ENCODE measurements at regions of chr3 and their contacts with region 1.

Region 1: DNA sequence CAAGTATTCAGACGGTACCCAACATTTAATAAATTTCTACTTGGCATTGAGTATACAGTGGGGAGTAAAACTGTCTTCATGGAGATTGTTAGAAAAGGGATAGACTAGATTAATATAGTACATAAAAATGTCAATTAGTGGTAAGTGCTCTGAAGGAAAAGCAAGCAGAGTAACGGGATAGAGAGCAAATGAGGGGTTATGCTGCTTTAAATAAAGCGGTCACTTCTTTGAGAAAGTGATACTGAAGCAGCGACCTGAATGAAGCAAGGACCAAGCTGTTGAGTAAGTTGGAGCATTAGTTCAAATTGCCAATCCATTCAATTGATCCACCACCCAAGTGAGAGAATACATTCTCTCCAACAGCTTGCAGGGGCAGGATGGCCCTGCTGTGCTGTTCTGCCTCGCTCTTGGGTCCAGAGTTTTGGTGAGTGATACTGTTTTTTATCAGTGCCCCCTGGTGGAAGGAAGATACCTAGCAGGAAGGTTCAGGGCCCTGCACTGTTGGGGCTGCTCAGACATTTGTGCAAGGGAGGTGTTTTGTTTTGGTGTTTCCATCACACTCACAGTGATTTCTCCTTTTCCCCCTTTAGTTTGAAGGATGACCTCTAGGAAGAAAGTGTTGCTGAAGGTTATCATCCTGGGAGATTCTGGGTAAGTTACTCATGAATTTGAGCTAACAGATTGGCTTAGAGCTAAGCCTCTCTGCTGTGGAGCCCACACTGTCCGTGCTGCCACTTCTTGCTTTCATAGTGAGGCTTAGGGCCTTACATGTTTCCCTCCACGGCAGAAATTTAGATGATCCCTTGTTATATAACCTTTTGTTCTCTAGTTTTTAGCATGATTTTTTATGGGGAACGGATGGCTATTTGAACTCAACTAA is 69.0 kb downstream of the RAB7A start:
- DNase-seq: peak; percentile 34 to 61 (median 48)
- H3K4me3 ChIP-seq: no peak overlapping the region
- H3K27ac ChIP-seq: no peak overlapping the region
- H3K4me1 ChIP-seq: peaks cover 8% of the 10 kb centered on the region
- H3K27me3 ChIP-seq: no peaks in the 10 kb centered on the region
- CTCF ChIP-seq: peak; percentile 33 to 70 (median 67)
- EP300 ChIP-seq: no peak
- POLR2A ChIP-seq: no peak

Region 2: GRCh38 chr3:128617557-128618397 is 177.2 kb before region 1 on chr3:
- intact Hi-C with region 1: loop called in 1 of 4 experiments (anchors 5 kb)
- DNase-seq: peak; percentile 97 to 99 (median 98)
- H3K4me3 ChIP-seq: peak overlapping the region; percentile 94
- H3K27ac ChIP-seq: peak overlapping the region; percentile 59 to 60
- H3K4me1 ChIP-seq: peaks cover 13% of the 10 kb centered on the region
- H3K27me3 ChIP-seq: no peaks in the 10 kb centered on the region
- CTCF ChIP-seq: peak; percentile 93 to 98 (median 94)
- EP300 ChIP-seq: no peak
- POLR2A ChIP-seq: no peak

Region 3: DNA sequence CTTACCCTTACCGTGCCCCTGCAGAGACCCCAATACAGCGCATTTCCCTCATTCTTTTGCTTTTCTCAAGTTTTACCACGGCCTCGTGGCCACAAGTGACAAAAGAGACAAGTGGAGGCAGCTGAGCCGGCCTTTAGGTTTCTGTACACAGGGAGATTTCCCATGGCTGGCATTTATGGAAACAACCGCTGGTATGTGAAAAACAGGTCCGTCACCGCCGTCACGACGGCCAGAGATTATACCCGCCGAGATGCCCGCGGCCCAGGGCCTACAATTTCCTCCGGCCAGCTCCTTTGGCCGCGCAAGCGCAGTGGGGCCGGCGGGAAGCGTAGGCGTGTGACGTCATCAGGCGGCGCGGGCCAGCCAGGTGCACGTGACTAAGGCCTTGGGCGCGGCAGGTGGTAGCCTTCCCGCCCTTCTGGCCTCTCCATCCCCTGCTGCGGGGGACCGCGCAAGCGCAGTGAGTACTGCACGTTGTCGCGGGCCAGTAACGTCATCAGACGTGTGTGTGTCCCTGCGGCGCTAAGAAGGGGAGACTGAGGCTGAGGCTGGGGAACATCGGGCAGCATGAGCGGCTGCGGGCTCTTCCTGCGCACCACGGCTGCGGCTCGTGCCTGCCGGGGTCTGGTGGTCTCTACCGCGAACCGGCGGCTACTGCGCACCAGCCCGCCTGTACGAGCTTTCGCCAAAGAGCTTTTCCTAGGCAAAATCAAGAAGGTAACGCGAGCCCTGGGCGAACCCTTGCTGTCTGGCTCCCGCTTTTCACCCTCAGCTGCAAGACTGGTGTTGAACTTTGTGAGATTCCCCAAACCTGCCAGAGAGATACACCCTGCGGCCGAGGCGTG is 84.3 kb after region 1 on chr3 and contains the start of gene ACAD9:
- intact Hi-C with region 1: no loop called
- DNase-seq: peak; percentile 97 to 99 (median 98)
- H3K4me3 ChIP-seq: peak within 1 kb of the TSS; percentile 85
- H3K27ac ChIP-seq: peak within 1 kb of the TSS; percentile 89 to 93
- H3K4me1 ChIP-seq: peaks cover 15% of the 10 kb centered on the region
- H3K27me3 ChIP-seq: no peaks in the 10 kb centered on the region
- CTCF ChIP-seq: peak in 1 of 3 donors; percentile 40
- EP300 ChIP-seq: no peak
- POLR2A ChIP-seq: peak; percentile 97
- total RNA-seq, gene ACAD9: 32.7 to 51.7 (median 39.0) TPM

Region 4: DNA sequence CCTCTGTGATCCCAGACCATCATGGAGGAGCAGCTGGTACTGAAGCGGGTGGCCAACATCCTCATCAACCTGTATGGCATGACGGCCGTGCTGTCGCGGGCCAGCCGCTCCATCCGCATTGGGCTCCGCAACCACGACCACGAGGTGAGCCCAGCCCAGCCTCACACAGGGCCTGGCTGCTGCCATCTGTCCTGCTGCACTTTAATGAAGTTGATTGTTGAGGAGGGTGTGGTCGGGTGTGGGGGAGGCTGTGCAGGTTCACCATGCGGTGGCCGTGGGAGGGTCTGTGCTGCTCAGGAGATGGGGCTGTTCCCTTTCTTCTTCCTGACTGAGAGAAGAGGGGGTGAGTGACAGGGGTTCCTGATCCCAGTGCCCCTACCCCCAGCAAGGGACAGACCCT is 115.0 kb after region 1 on chr3:
- intact Hi-C with region 1: no loop called
- DNase-seq: no peak
- H3K4me3 ChIP-seq: no peak overlapping the region
- H3K27ac ChIP-seq: no peak overlapping the region
- H3K4me1 ChIP-seq: no peaks in the 10 kb centered on the region
- H3K27me3 ChIP-seq: no peaks in the 10 kb centered on the region
- CTCF ChIP-seq: no peak
- EP300 ChIP-seq: no peak
- POLR2A ChIP-seq: no peak